Activated naive CD4-positive, alpha-beta T cell treated with anti-CD3 and anti-CD28 coated beads for 36 hours (primary cell): ENCODE measurements at regions of chr17 and their contacts with region 1.

Region 1: GRCh38 chr17:77963441-77963840 is 4.9 kb downstream of the TNRC6C start:
- DNase-seq: peak; percentile 63
- H3K4me3 Mint-ChIP-seq: no peak overlapping the region
- H3K27ac Mint-ChIP-seq: no peak overlapping the region
- H3K4me1 Mint-ChIP-seq: peaks cover 67% of the 10 kb centered on the region
- H3K27me3 Mint-ChIP-seq: no peaks in the 10 kb centered on the region

Region 2: GRCh38 chr17:77999413-78000173 is 36.2 kb after region 1 on chr17:
- CTCF ChIA-PET with region 1: no interaction called
- intact Hi-C with region 1: loop called (anchors 5 kb)
- DNase-seq: peak; percentile 21
- H3K4me3 Mint-ChIP-seq: no peak overlapping the region
- H3K27ac Mint-ChIP-seq: no peak overlapping the region
- H3K4me1 Mint-ChIP-seq: peaks cover 70% of the 10 kb centered on the region
- H3K27me3 Mint-ChIP-seq: no peaks in the 10 kb centered on the region